HepG2 (cell line): ENCODE measurements at regions of chr20 and their contacts with region 1.

Region 1: GRCh38 chr20:63366390-63367365 is 5.5 kb upstream of the CHRNA4 start:
- DNase-seq: no peak
- ATAC-seq: no peak
- H3K4me3 ChIP-seq: no peak overlapping the region
- H3K27ac ChIP-seq: no peak overlapping the region
- H3K4me1 ChIP-seq: peaks cover 54% of the 10 kb centered on the region
- H3K27me3 ChIP-seq: peaks cover 21 to 91% of the 10 kb centered on the region in 2 experiments
- CTCF ChIP-seq: no peak
- EP300 ChIP-seq: no peak
- POLR2A ChIP-seq: no peak
- RAD21 ChIP-seq: no peak

Region 2: DNA sequence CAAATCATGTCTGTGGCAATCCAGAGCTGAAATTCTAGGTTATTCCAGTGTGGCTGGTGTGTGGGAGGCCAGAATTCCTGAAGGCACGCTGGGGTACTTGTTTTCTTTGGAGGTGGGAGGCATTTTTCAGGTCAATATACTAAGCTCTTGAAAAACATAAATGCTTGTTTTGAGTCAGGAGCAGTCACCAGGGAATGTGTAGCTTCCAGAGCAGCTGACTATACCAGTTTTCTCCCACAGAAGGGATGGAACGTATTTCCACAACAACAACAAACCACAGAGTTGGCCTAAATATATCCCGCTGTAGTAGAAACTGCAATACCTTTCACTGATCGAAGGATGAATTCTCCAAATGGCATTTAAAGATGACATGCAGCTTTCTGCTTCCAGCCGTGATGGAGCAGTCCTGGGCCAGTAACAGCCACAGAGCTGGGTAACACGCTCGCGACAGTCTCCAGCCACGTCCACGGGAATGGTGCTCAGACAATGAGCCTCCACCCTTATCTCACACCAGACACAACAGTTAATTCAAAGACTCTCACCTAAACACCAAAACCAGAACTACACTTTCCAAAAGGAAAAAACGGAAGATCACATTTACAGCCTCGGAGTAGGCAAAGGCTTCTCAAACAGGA is 28.8 kb before region 1 on chr20:
- CTCF ChIA-PET with region 1: no interaction called
- POLR2A ChIA-PET with region 1: no interaction called
- in situ Hi-C with region 1: no loop called
- intact Hi-C with region 1: loop called (anchors 2 kb)
- DNase-seq: no peak
- ATAC-seq: no peak
- H3K4me3 ChIP-seq: no peak overlapping the region
- H3K27ac ChIP-seq: no peak overlapping the region
- H3K4me1 ChIP-seq: no peaks in the 10 kb centered on the region
- H3K27me3 ChIP-seq: peaks cover 1 to 31% of the 10 kb centered on the region in 2 experiments
- CTCF ChIP-seq: no peak
- EP300 ChIP-seq: no peak
- POLR2A ChIP-seq: no peak
- RAD21 ChIP-seq: no peak

Region 3: DNA sequence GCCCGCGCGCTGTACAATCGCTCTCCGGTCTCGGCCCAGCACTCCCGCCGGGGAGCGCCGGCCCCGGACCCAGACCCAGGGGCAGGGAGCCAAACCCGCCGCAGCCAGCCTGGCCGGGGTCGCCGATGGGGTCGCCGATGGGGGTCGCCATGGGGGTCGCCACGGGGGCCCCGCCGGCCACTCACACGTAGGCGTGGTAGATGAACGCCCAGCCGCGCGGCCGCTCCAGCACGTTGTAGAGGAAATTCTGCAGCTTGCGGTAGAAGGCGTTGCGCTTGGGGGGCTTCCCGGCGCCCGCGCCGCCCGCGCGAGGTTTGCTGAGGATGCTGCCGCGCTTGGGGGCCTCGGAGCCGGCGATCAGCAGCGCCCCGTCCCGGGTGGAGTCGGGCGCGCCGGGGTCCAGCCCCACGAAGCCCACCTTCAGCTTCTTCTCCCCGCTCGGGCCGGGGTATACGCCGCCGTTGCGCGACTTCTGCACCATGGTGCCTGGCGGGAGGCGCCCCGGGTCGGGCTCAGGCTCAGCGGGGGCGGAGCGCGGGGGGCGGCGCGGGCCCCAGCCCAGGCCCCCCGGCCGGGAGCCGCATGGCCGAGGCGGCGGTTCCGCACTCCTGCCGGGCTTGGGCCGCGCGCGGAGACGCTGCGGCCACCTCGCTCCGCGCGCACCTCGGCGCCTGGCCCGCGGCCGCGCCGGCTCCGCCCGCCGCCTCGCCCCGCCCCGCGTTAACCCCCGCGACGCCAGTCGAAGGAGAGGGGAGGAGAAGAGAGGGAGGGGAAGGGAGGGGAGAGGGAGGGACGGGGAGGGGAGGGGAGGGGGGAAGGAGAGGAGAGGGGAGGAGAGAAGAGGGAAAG is 105.5 kb after region 1 on chr20 and contains the start of gene KCNQ2:
- CTCF ChIA-PET with region 1: no interaction called
- POLR2A ChIA-PET with region 1: no interaction called
- in situ Hi-C with region 1: no loop called
- intact Hi-C with region 1: no loop called
- DNase-seq: no peak
- ATAC-seq: no peak
- H3K4me3 ChIP-seq: no peak within 1 kb of the TSS; a peak in 1 of 6 replicates
- H3K27ac ChIP-seq: no peak within 1 kb of the TSS
- H3K4me1 ChIP-seq: no peaks in the 10 kb centered on the region
- H3K27me3 ChIP-seq: peaks cover 43 to 86% of the 10 kb centered on the region in 2 experiments
- CTCF ChIP-seq: no peak
- EP300 ChIP-seq: no peak
- POLR2A ChIP-seq: no peak
- RAD21 ChIP-seq: no peak
- total RNA-seq, gene KCNQ2: not detected in 2 replicates